ENCODE measurements at regions of chrX and their contacts with region 1.

Region 1: GRCh38 chrX:78619834-78620233 is 39.3 kb downstream of the RTL3 start:
- DNase-seq: no peak
- H3K4me3 ChIP-seq: no peak overlapping the region
- H3K27ac ChIP-seq: no peak overlapping the region
- H3K4me1 ChIP-seq: no peaks in the 10 kb centered on the region
- H3K27me3 ChIP-seq: peaks cover 0 to 16% of the 10 kb centered on the region in 2 donors
- CTCF ChIP-seq: no peak
- POLR2A ChIP-seq: no peak

Region 2: GRCh38 chrX:78595901-78596502 is 23.8 kb before region 1 on chrX:
- intact Hi-C with region 1: no loop called
- DNase-seq: no peak
- H3K4me3 ChIP-seq: no peak overlapping the region
- H3K27ac ChIP-seq: no peak overlapping the region
- H3K4me1 ChIP-seq: no peaks in the 10 kb centered on the region
- H3K27me3 ChIP-seq: peaks cover 0 to 7% of the 10 kb centered on the region in 2 donors
- CTCF ChIP-seq: no peak
- POLR2A ChIP-seq: no peak

Region 3: GRCh38 chrX:78979789-78980464 is 360.1 kb after region 1 on chrX:
- intact Hi-C with region 1: loop called (anchors 5 kb)
- DNase-seq: no peak
- H3K4me3 ChIP-seq: no peak overlapping the region
- H3K27ac ChIP-seq: no peak overlapping the region
- H3K4me1 ChIP-seq: no peaks in the 10 kb centered on the region
- H3K27me3 ChIP-seq: peaks cover 0 to 5% of the 10 kb centered on the region in 2 donors
- CTCF ChIP-seq: no peak
- POLR2A ChIP-seq: no peak

Region 4: DNA sequence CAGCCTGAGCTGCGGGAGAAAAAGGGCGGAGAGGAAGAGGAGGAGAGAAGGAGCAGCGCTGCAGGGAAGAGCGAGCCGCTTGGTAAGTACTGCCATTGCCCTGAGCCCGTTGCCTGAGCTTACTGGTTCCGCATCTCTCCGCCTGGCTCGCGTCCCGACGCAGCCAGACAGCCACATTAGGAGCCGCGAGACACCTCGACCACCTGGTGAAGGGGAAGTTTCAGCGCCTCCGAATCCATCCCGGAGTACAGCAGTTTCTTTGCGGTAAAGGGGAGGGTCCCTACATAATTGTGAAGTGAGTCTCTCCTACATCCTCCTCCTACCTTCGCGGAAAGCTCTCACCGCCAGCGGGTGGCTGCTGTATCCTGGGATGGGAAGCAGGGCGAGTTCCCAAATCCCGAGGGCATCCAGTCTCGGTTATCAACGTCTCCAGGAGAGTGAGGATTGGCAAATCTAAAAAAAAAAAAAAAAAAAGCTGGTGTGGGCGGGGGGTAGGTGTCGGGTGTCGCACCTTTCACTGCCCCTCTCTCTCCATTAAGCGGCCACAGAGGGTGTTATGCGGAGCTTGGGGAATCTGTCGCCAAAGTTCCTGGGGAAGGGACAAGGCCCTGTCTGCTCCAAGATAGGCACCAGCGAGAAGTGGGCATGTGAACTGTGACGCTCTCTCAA is 1402.7 kb after region 1 on chrX:
- intact Hi-C with region 1: no loop called
- DNase-seq: no peak
- H3K4me3 ChIP-seq: peak overlapping the region; percentile 13 to 54 (median 17)
- H3K27ac ChIP-seq: no peak overlapping the region
- H3K4me1 ChIP-seq: no peaks in the 10 kb centered on the region
- H3K27me3 ChIP-seq: peaks cover 0 to 43% of the 10 kb centered on the region in 2 donors
- CTCF ChIP-seq: no peak
- POLR2A ChIP-seq: no peak

Measured in breast epithelium (tissue), 4 donors.